Gastrocnemius medialis (tissue), 4 donors: ENCODE measurements at regions of chr17 and their contacts with region 1.

Region 1: DNA sequence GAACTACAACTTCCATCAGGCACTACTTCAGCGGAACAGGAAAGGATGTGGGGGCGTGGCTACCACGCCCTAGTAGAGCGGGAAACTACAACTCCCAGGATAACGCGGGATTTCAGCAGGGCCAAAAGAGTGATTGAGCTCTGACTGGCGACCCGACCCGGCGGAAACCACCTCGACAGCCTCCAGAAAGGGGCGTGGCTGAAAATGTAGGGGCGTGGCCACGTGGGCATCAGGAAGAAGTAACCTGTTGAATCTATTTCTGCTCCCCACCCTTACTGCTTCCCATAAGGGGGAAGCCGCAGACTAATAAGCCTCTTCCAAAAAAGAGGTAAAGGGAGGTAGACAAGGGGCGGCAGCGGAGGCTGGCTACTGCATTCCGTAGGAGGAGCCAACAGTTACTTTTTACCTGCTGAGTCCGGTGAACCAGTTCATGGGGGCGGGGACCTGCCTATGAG is at the start of gene TMEM102:
- DNase-seq: peak; percentile 95 to 97
- ATAC-seq: peak; percentile 84 to 88
- H3K4me3 ChIP-seq: peak within 1 kb of the TSS; percentile 53 to 63 (median 58)
- H3K27ac ChIP-seq: peak within 1 kb of the TSS; percentile 80 to 100 (median 94)
- H3K4me1 ChIP-seq: peaks cover 29 to 45% of the 10 kb centered on the region in 2 donors
- H3K27me3 ChIP-seq: peaks cover 0 to 4% (median 0%) of the 10 kb centered on the region in 3 donors
- CTCF ChIP-seq: no peak
- POLR2A ChIP-seq: peak; percentile 11 to 14
- total RNA-seq, gene TMEM102: 0.92 to 3.9 (median 2.3) TPM

Region 2: DNA sequence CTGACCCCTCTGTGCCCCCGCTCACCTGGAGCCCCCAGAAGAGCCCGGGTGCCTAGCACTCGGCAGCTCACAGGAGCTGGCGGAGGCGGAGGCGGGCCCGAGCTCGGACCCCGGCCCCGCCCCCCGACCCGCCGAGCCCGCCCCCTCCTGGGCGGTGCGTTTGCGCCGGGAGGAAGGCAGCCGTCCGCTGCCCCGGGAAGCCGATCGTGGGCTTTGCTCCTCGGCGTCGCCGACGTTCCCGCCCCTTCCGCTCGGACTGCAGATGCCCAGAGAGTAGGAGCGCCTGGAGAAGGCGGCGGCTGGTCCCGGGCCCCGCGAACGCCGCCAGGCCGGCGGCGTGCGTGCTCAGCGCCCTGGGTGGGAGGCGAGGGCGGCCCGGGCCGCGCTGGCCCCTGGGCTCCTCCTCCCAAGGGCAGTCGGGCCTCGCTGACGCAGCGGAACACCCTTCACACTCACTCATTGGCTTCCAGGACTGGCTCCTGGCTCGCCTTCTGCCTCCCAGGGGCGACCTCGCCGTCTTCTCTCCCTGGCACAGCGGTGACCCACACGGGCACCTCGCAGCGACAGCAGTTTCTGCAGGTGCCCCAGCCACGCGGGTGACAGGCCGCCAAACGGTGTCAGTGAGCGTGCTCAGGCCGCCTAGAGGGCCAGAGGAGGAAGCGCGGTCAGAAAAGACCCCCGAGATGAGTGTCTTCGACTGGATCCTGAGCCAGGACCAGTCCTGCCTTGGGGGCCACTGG is 40.6 kb before region 1 on chr17 and contains the start of gene PLSCR3:
- in situ Hi-C with region 1: no loop called
- intact Hi-C with region 1: loop called (anchors 1 kb)
- DNase-seq: peak; percentile 64 to 81
- ATAC-seq: peak; percentile 89 to 91
- H3K4me3 ChIP-seq: peak within 1 kb of the TSS; percentile 73 to 97 (median 88)
- H3K27ac ChIP-seq: peak within 1 kb of the TSS; percentile 83 to 97 (median 90)
- H3K4me1 ChIP-seq: peaks cover 9 to 10% of the 10 kb centered on the region in 2 donors
- H3K27me3 ChIP-seq: no peaks in the 10 kb centered on the region
- CTCF ChIP-seq: peak; percentile 32 to 61 (median 42)
- POLR2A ChIP-seq: peak; percentile 93
- total RNA-seq, gene PLSCR3: 8.9 to 20.3 (median 14.4) TPM

Region 3: GRCh38 chr17:7403977-7404736 is 31.1 kb before region 1 on chr17 and contains the start of gene TMEM256:
- in situ Hi-C with region 1: no loop called
- intact Hi-C with region 1: loop called (anchors 1 kb)
- DNase-seq: peak; percentile 100
- ATAC-seq: peak; percentile 90
- H3K4me3 ChIP-seq: peak within 1 kb of the TSS; percentile 62 to 81 (median 70)
- H3K27ac ChIP-seq: peak within 1 kb of the TSS; percentile 92 to 97 (median 92)
- H3K4me1 ChIP-seq: peaks cover 19 to 20% of the 10 kb centered on the region in 2 donors
- H3K27me3 ChIP-seq: no peaks in the 10 kb centered on the region
- CTCF ChIP-seq: peak in 2 of 5 experiments; percentile 13 to 22
- POLR2A ChIP-seq: peak; percentile 94 to 96
- total RNA-seq, gene TMEM256: 28.9 to 65.6 (median 50.2) TPM

Region 4: GRCh38 chr17:7416323-7416722 is 18.9 kb before region 1 on chr17:
- in situ Hi-C with region 1: no loop called
- intact Hi-C with region 1: no loop called
- DNase-seq: no peak
- ATAC-seq: no peak
- H3K4me3 ChIP-seq: no peak overlapping the region
- H3K27ac ChIP-seq: no peak overlapping the region
- H3K4me1 ChIP-seq: no peaks in the 10 kb centered on the region
- H3K27me3 ChIP-seq: no peaks in the 10 kb centered on the region
- CTCF ChIP-seq: no peak
- POLR2A ChIP-seq: no peak

Region 5: GRCh38 chr17:7530023-7530900 is 95.0 kb after region 1 on chr17:
- in situ Hi-C with region 1: no loop called
- intact Hi-C with region 1: no loop called
- DNase-seq: no peak
- ATAC-seq: no peak
- H3K4me3 ChIP-seq: no peak overlapping the region
- H3K27ac ChIP-seq: no peak overlapping the region
- H3K4me1 ChIP-seq: no peaks in the 10 kb centered on the region
- H3K27me3 ChIP-seq: no peaks in the 10 kb centered on the region
- CTCF ChIP-seq: no peak
- POLR2A ChIP-seq: no peak